ENCODE measurements at regions of chr10 and their contacts with region 1.

Region 1: DNA sequence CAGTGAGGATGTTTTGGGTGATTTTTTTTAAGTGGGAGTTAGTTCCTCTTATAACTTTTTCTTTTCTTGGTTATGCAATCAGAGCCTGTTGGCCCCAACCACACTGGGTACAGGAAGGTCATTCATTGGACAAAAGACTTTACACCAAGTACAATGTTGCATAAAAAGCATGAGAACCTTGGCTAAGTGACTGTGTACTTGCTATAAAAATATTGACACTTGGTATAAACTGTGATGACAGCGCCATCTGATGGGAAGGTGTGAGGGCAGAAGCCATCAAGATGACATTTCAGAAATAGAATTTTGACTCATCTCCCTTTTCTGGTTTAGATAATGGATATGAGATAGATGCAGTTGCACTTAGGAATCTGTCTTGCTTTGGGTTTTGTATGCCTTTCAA is 126.4 kb upstream of the CCDC6 start:
- DNase-seq: peak; percentile 79
- H3K4me3 Mint-ChIP-seq: no peak overlapping the region
- H3K27ac Mint-ChIP-seq: no peak overlapping the region
- H3K4me1 Mint-ChIP-seq: no peaks in the 10 kb centered on the region
- H3K27me3 Mint-ChIP-seq: no peaks in the 10 kb centered on the region

Region 2: DNA sequence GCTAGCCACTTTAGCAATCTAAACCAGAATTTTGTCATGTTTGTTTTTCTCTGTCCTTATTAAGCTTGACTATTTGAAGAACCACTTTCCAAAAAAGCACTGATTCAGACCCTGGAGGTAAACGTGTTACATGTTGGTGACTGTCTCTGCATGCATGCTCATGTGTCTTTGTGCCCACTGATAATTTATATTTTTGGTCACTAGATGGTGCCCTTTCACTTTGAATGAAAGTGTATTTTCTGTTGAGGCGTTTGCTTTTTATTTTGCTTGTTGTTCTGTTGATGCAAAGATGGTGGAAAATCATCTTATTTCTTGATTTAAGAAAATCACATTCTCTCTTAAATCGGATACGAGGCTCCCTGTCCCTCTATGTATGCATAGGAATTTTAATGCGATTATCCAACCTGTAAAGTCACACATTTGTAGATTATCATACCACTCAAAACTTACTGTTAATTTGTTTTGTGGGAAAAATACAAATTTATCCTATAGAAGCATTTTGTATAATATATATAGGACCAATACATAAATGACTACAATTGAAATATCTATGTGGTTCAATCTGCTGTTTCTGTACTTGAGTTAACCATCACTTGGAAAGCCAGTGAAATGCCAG is 1250.7 kb before region 1 on chr10:
- CTCF ChIA-PET with region 1: no interaction called
- intact Hi-C with region 1: loop called (anchors 2 kb)
- DNase-seq: peak; percentile 4
- H3K4me3 Mint-ChIP-seq: no peak overlapping the region
- H3K27ac Mint-ChIP-seq: no peak overlapping the region
- H3K4me1 Mint-ChIP-seq: no peaks in the 10 kb centered on the region
- H3K27me3 Mint-ChIP-seq: peaks cover 8% of the 10 kb centered on the region

Region 3: GRCh38 chr10:59240582-59241183 is 792.0 kb before region 1 on chr10:
- CTCF ChIA-PET with region 1: no interaction called
- intact Hi-C with region 1: loop called (anchors 2 kb)
- DNase-seq: no peak
- H3K4me3 Mint-ChIP-seq: no peak overlapping the region
- H3K27ac Mint-ChIP-seq: no peak overlapping the region
- H3K4me1 Mint-ChIP-seq: no peaks in the 10 kb centered on the region
- H3K27me3 Mint-ChIP-seq: no peaks in the 10 kb centered on the region

Region 4: DNA sequence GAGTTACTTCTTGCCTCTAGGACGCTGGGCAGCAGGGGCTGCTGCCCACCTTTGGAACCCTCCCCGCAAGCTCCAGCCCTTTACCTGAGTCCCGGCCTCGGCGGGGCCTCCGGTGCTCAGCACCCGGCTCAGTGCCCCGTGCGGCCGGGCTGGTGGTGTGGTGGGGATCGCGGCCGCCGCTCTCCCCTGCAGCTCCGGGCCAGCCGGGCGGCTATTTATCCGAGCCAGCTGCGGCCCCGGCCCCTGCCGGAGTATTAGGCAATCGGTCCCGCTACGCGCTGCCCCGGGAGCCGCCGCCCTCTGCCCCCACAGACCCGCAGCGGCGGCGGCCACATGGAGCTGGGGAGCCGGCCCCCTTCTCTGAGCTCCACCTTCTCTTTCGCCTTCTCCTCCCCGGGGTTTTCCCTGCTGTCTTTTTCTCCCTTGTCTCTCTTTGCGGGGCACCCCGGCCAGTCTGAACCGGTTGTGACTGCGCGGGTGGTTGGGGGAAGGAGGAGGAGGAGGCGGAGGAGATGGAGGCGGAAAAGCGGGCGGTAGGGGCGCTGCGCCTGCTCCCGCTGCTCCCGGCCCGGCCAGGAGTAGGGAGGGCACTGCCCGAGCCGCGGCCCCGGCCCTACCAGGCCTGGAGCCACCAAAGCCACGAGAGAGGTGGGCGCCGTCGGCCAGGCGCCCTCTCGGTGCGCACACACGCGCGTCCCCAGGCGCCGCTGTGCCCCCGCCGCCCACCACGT is 323.2 kb before region 1 on chr10 and contains the start of gene SLC16A9:
- CTCF ChIA-PET with region 1: no interaction called
- intact Hi-C with region 1: loop called (anchors 5 kb)
- DNase-seq: peak; percentile 89
- H3K4me3 Mint-ChIP-seq: peak within 1 kb of the TSS; percentile 72
- H3K27ac Mint-ChIP-seq: no peak within 1 kb of the TSS
- H3K4me1 Mint-ChIP-seq: peaks cover 8% of the 10 kb centered on the region
- H3K27me3 Mint-ChIP-seq: peaks cover 62% of the 10 kb centered on the region
- total RNA-seq, gene SLC16A9: 0.84 to 0.86 TPM

Region 5: DNA sequence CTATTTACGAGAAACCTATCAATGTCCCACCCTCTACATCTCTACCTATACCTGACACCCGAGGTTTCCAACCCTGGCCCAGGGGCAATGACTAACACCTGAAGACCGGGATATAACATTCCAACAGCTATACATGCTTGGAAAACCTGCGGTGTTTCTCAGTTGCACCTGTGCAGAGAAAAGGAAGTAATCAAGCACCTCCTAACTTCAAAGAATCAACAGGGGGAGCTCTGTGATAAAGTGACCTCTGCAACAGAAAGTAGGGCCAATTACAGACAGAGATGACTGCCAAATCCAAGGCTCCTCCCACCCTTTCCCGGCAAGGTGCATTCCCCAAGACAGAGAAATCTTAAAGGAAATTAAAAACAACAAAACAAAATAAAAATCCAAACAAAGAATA is 167.6 kb before region 1 on chr10:
- CTCF ChIA-PET with region 1: no interaction called
- intact Hi-C with region 1: loop called (anchors 1 kb)
- DNase-seq: peak; percentile 33
- H3K4me3 Mint-ChIP-seq: no peak overlapping the region
- H3K27ac Mint-ChIP-seq: peak overlapping the region; percentile 14
- H3K4me1 Mint-ChIP-seq: peaks cover 70% of the 10 kb centered on the region
- H3K27me3 Mint-ChIP-seq: no peaks in the 10 kb centered on the region